ENCODE measurements at regions of chr3 and their contacts with region 1.

Region 1: DNA sequence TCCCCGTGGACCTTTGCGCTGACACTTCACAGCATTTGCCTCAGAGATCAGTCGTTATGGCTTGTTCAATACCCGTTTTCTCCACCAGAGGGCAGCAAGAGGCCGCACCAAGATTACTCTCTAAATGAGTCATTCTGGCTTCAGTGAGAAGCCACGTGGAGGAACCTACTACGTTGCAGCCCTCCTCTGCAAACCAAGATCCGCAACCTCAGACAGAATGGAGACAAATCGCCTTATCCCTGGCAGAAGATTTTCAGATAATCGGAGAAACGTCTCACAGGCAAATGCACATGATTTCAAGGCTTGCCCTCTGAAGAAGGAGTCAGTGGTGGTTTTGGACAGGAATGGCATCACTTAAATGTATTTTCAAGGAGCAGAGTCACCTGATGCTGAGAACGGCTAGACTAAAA is 60.5 kb downstream of the GTPBP8 start:
- DNase-seq: peak; percentile 93 to 97
- H3K4me3 ChIP-seq: no peak overlapping the region
- CTCF ChIP-seq: peak in 1 of 3 donors; percentile 98
- POLR2A ChIP-seq: no peak

Region 2: DNA sequence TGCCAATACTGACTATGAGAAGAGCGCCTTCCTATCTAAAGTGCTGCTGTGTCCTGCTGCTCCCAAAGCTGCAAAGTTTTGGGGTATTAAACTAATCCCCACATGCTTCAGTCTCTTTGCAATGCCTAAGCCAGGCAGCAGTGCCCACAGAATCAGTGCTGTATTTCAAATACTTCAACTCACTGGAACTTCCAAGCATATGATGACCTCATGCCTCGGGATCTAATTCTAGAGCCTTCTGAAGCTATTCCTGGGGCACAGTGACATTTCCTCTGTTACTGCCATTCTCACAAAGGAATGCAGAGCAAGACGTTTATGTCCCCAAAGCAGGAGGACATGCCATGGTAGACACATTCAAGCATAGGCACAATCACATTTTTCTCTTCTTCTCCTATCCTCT is 639.9 kb before region 1 on chr3:
- intact Hi-C with region 1: no loop called
- DNase-seq: no peak
- H3K4me3 ChIP-seq: no peak overlapping the region
- CTCF ChIP-seq: no peak
- POLR2A ChIP-seq: no peak

Region 3: DNA sequence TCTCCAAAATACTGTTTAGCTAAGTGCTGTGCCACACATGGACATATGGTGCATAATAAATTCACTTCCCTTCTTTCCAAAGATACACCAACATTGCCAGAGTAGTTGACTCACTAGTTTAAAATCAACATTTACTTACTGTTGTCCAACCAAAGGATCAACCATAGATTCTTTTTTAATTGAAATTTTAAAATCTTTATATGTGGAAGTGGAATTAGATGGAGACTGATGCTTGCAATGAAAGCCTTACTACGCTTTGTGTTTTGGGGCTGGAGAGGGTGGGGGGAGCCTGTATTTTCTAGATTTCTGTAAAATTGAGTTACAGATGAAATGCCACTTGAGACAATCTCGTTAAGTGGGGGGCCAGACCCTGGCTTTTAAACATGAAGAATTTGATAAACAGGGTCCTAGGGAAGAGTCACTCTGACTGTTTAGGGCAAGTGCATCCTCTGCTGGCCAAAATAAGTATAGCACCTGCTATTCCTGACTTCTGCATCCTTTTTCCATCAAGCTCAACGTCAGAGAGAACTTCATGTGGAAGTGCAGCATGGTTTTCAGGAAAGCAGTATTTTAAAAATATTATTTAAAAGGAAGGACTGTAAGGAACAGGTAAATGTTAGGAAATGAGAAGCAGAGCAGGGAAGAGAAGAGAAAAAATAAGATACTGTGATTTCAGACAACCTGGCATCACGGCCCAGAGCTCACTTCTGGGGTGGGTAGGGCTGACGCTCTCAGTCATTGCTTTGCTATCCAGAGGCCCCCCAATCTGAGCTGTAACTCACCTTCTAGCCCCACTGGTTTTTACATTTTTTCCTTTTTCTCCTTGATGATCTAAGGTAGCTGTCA is 236.7 kb after region 1 on chr3:
- intact Hi-C with region 1: loop called (anchors 5 kb)
- DNase-seq: peak in 1 of 2 donors; percentile 82
- H3K4me3 ChIP-seq: no peak overlapping the region
- CTCF ChIP-seq: peak in 2 of 3 donors; percentile 88 to 99
- POLR2A ChIP-seq: no peak

Measured in lower leg skin (tissue), 4 donors.